AG04450 (cell line): ENCODE measurements at regions of chr4 and their contacts with region 1.

Region 1: GRCh38 chr4:183588169-183588675 is 70.8 kb downstream of the RWDD4 start:
- DNase-seq: peak; percentile 11
- H3K4me3 ChIP-seq: peak overlapping the region; percentile 7; the same call in 1 of the 2 replicates
- H3K27ac ChIP-seq: no peak overlapping the region
- H3K27me3 ChIP-seq: no peaks in the 10 kb centered on the region
- CTCF ChIP-seq: no peak

Region 2: GRCh38 chr4:183887351-183887750 is 299.1 kb after region 1 on chr4:
- CTCF ChIA-PET with region 1: no interaction called
- POLR2A ChIA-PET with region 1: no interaction called
- DNase-seq: no peak
- H3K4me3 ChIP-seq: no peak overlapping the region
- H3K27ac ChIP-seq: no peak overlapping the region
- H3K27me3 ChIP-seq: peaks cover 3% of the 10 kb centered on the region
- CTCF ChIP-seq: no peak

Region 3: GRCh38 chr4:184028394-184029374 is 440.5 kb after region 1 on chr4:
- CTCF ChIA-PET with region 1: no interaction called
- POLR2A ChIA-PET with region 1: interaction called, 12 read pairs
- DNase-seq: no peak
- H3K4me3 ChIP-seq: peak overlapping the region; percentile 44
- H3K27ac ChIP-seq: no peak overlapping the region
- H3K27me3 ChIP-seq: no peaks in the 10 kb centered on the region
- CTCF ChIP-seq: no peak